ENCODE measurements at regions of chr17 and their contacts with region 1.

Region 1: DNA sequence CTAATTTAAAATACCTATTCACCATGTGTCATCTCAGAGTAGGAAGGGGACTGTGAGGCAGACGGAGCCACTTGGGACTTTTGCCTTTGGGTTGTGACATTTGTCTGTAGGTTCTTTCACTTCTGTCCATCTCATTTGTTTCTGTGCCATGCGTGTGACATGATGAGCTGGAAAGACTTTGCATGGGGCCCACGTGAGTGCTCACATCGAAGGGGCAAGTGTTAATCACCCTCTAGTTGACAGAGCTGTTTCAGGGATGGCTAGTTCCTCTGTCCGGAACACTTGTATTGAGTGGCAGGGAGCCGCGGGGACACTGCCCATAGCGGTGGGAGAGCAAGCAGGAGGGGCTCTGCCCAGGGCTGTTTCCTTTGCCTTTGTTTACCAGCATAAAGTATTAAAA is 112.0 kb downstream of the RPTOR start:
- DNase-seq: no peak
- ATAC-seq: peak; percentile 89
- H3K4me3 Mint-ChIP-seq: peak overlapping the region; percentile 6
- H3K27ac Mint-ChIP-seq: peak overlapping the region; percentile 21
- H3K4me1 Mint-ChIP-seq: peaks cover 25% of the 10 kb centered on the region
- H3K27me3 Mint-ChIP-seq: no peaks in the 10 kb centered on the region
- CTCF ChIP-seq: no peak

Region 2: DNA sequence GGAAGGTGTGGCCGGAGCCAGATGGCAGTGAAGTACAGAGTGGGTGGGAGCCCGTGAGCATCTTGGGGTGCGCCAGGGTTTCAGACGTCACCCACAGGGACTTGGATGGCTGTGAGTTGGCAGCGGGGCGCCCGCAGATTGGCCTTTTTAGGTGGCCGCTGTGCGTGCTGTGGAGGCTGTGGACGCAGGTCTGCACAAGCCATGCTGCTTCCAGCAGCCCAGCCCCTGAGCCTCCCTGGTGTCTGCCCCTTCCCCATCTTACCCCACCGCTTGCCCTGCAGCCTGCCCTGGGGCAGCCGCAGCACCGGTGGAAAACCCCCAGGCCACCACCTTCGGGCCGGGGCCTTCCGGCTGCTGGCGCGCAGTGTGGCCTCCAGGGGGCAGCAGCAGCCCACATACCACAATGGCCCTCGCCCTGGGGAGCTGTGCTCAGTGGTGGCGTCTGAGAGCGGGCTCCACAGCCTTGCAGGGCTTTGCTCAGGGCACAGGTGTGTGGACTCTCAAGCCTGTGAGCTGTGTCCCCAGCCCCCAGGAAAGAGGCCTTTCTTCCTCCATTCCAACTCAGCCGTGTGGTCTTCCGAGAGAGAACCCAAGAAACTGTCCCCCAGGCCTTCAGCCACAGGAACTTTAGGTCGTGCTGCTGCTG is 229.8 kb before region 1 on chr17:
- CTCF ChIA-PET with region 1: no interaction called
- POLR2A ChIA-PET with region 1: no interaction called
- intact Hi-C with region 1: no loop called
- DNase-seq: peak; percentile 87
- ATAC-seq: peak; percentile 97
- H3K4me3 Mint-ChIP-seq: no peak overlapping the region
- H3K27ac Mint-ChIP-seq: no peak overlapping the region
- H3K4me1 Mint-ChIP-seq: peaks cover 29% of the 10 kb centered on the region
- H3K27me3 Mint-ChIP-seq: no peaks in the 10 kb centered on the region
- CTCF ChIP-seq: peak; percentile 79

Region 3: DNA sequence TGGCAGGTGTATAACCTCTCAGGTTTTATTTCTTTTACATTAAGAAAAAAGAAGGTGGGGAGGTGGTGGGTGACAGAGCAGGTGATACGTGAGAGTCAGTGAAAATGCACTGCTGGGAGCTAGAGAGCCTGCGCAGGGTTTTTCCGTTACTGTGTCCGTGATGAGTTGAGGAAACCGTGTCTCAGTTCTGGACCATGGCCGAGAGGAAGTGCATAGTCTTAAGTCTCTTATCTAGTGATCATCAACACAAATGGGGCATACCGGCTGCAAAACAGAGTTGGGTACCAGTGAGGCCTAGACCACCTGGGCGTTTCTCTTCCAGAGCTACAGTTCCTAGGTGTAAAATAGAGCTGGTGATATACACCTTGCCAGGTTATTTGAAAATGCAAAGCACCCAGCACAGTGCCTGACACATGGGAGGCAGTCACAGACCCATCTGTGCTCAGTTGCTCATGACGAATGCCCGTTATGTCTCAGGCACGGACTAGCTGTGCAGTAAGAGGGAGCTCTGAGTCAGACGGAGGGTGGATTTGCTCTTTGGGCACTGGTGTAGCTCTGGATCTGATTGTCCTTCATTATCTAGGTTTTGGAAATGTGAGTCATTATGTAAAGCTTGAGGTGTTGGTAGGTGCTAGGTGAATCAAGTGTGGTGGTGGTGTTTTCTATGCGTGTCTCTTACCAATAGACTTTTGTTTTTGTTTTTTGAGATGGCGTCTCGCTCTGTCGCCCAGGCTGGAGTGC is 51.1 kb before region 1 on chr17:
- CTCF ChIA-PET with region 1: no interaction called
- POLR2A ChIA-PET with region 1: no interaction called
- intact Hi-C with region 1: loop called (anchors 5 kb)
- DNase-seq: peak; percentile 25
- ATAC-seq: peak; percentile 94
- H3K4me3 Mint-ChIP-seq: peak overlapping the region; percentile 48
- H3K27ac Mint-ChIP-seq: peak overlapping the region; percentile 79
- H3K4me1 Mint-ChIP-seq: peaks cover 53% of the 10 kb centered on the region
- H3K27me3 Mint-ChIP-seq: no peaks in the 10 kb centered on the region
- CTCF ChIP-seq: no peak

Measured in activated B cell treated with CpG ODN at 0.5 μM for 24 hours (primary cell).